ENCODE measurements at regions of chr6 and their contacts with region 1.

Region 1: DNA sequence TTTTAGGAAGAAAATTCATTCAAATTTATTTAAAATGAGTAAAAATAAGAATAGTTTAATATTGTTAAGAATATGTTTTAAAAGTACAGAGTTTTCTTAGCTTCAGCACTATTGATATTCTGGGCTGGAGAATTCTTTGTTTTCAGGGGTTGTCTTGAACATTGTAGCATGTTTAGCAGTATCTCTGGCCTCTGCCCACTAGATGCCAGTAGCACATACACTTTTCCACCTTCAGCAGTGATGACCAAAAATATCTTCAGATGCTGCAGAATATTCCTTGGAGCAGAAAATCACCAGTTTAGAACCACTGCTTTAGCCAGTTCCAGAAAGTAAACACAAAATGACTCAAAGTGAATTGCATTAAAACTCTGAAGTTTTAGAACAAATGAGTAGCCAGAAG is 19.4 kb upstream of the SDHAF4 start:
- DNase-seq: no peak
- ATAC-seq: peak; percentile 88

Region 2: GRCh38 chr6:70686548-70687133 is 139.3 kb after region 1 on chr6:
- intact Hi-C with region 1: loop called (anchors 2 kb)
- DNase-seq: no peak
- ATAC-seq: peak; percentile 66

Region 3: DNA sequence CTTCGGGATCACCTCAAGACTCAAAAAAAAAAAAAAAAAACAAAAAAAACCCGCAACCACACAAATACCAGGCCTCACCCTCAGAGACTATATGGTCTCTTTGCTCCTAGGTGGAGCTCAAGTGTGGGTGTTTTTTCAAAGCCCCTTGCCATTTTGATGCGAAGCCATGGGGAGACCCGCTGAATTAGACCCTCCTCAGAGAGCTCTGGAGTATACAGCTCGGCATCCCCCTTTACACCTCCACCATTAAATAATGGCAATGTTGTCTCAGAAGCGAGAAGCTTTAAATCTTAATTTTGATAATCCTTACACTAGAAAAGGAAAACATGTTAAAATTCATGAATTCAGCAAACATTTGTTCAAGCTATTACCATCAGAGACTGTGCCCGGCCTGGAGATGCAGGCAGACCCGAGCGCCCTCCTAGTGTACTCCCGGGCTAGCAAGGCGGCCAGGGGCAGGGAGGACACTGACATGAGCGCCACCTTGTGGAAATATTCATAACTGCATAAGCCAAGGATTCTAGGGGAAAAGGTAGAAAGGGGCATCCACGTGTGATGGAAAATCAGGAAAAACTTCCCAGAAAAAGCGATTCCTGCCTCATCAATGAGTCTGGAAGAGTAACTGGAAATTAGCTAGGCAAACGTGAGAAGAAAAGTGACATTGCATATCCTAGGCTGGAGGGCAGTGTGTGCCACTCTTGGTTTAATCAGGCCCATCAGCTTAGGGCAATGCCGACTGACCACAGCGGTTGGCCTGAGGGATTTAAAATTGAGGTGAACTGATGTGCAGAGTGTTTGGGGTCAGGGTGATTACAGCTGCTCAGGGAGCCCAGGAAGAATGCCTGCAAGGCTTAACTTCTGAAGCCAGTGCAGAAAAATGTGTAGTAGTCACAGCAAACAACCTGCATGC is 337.0 kb after region 1 on chr6:
- intact Hi-C with region 1: loop called (anchors 10 kb)
- DNase-seq: peak; percentile 62
- ATAC-seq: peak; percentile 84

Region 4: DNA sequence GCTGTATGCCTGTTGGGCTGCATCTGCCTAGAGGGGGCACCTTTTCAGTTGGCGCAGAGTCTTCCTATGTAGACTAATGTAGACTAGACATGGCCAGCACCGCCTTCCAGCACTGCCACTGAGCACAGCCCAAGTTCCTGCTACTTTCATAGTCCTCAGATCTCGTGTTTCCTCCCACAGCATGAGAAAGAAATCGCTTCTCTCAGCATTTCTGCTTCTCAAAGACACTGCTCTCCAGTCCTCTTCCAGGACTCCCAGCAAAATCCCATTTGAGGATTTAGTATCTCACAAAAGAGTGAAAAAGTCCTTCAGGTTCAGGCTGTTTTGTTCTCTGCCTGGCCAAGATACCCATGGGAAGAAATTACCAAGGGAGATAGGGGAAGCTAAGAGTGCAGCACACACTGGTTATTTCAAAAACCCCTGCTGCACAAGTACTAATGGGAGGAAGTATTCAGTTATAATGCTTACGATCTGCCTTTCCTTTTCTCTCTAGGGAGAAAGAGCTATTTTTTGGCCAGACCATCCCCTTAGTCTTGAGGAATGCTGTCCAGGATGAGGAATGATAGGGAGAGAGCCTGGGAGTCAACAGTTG is 777.0 kb after region 1 on chr6:
- intact Hi-C with region 1: no loop called
- DNase-seq: no peak
- ATAC-seq: peak; percentile 62

Measured in left ventricle myocardium superior (tissue), 1 donor.